ENCODE measurements at regions of chr22 and their contacts with region 1.

Region 1: GRCh38 chr22:24423519-24424000 is 3.8 kb upstream of the ADORA2A start:
- DNase-seq: peak; percentile 89
- ATAC-seq: peak; percentile 19
- H3K4me3 Mint-ChIP-seq: peak overlapping the region; percentile 66
- H3K27ac Mint-ChIP-seq: peak overlapping the region; percentile 65
- H3K4me1 Mint-ChIP-seq: peaks cover 30% of the 10 kb centered on the region
- H3K27me3 Mint-ChIP-seq: no peaks in the 10 kb centered on the region

Region 2: GRCh38 chr22:24433813-24434470 is 10.4 kb after region 1 on chr22:
- POLR2A ChIA-PET with region 1: interaction called, 54 read pairs
- DNase-seq: peak; percentile 44
- ATAC-seq: peak; percentile 32
- H3K4me3 Mint-ChIP-seq: peak overlapping the region; percentile 77
- H3K27ac Mint-ChIP-seq: peak overlapping the region; percentile 90
- H3K4me1 Mint-ChIP-seq: peaks cover 75% of the 10 kb centered on the region
- H3K27me3 Mint-ChIP-seq: no peaks in the 10 kb centered on the region

Measured in activated naive CD8-positive, alpha-beta T cell treated with anti-CD3 and anti-CD28 coated beads, Interleukin-2, amount 10 ng/mL, durations not matched to agents 7 days and 5 days (primary cell).